GM10248 (cell line): ENCODE measurements at regions of chr6 and their contacts with region 1.

Region 1: GRCh38 chr6:24274441-24275083 is 83.3 kb downstream of the DCDC2 start:
- DNase-seq: no peak
- CTCF ChIP-seq: peak; percentile 57

Region 2: DNA sequence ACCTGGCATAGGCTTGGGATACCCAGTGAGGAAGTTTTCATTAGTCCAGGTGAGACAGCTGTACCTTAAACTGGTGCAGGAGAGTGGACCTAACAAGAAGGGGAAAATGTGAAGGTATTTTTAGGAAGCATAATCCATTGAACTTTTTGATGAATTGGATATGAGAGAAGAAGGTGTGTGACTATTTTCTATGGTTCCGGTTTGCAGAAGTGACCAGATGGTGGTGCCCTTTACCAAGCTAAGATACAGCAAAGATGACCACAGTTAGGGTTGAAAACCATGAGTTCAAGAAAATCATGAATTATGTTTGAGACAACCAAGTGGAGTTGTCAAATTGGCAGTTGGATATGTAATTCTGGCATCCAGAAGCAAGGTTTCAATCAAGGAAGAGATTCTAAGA is 210.5 kb before region 1 on chr6:
- CTCF ChIA-PET with region 1: interaction called, 16 read pairs
- POLR2A ChIA-PET with region 1: no interaction called
- DNase-seq: no peak
- CTCF ChIP-seq: peak; percentile 41

Region 3: DNA sequence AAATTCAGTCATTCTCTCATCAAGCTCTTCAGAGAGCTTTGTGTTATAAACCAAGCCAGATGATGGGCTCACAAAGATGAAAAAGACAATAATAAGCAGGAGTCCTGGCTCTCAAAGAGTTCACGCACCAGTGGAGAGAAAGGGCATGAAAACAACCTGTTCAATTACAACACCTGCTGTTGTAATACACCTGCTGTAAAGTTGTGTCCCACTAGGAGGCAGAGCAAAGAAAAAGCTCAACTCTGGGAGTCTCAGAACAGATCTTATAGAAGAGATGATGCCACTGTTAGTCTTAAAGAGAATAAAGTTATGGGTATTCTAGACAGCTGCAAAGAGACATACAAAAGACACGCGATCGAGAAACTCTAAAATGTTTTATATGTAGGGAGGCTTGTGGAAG is 17.3 kb before region 1 on chr6:
- CTCF ChIA-PET with region 1: interaction called, 10 read pairs
- POLR2A ChIA-PET with region 1: no interaction called
- DNase-seq: no peak
- CTCF ChIP-seq: no peak